HepG2 (cell line): ENCODE measurements at regions of chr5 and their contacts with region 1.

Region 1: DNA sequence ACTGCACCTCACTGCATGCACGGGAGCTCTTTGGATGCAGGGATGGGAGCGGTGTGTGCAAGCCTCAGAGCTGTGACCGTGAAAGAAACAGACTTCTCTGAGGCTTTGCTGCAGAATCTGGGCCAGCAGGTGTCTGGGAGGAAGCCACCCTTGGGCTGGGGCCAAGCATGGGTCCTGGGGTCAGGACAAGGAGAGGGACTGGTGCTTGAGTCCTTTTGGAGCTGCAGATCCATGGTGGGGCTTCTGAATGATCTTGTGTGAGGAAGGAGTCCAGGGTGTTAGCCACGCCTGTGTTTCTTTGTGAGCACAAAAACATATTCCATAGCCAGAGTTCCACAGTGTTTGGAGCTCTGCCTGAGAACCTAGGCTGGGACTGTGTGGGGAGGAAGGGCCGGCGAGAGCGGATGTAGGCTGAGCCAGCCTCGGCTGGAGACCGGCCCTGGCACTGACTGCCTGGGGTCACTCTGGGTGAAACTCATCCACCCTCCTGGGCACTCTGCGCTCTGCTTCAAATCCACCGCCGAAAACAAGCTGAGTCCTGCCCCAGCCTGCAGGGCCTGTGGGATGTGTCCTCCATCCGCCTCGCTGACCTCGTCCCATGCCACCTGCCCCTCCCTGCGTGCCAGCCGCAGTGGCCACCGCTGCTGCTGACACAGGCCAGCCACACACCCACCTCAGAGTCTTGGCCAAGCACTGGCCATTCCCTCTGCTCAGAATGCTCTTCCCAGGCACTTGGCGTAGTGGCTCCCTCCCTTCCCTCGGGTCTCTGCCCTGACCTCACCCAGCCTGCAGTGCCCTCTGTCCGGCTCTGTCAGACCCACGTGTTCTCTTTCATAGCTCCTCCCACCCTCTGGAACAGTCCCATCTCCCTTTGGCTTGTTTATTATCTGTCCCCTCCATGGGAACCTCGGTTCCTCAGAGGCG is 26.7 kb downstream of the ERGIC1 start:
- DNase-seq: no peak
- ATAC-seq: no peak
- H3K4me3 ChIP-seq: peak overlapping the region in 1 of 3 experiments; percentile 6; a peak in 1 of 6 replicates
- H3K27ac ChIP-seq: peak overlapping the region; percentile 99
- H3K4me1 ChIP-seq: peaks cover 87% of the 10 kb centered on the region
- H3K27me3 ChIP-seq: no peaks in the 10 kb centered on the region
- CTCF ChIP-seq: no peak
- EP300 ChIP-seq: no peak
- POLR2A ChIP-seq: no peak
- RAD21 ChIP-seq: no peak

Region 2: GRCh38 chr5:172733131-172733973 is 127.4 kb before region 1 on chr5:
- CTCF ChIA-PET with region 1: no interaction called
- POLR2A ChIA-PET with region 1: interaction called, 13 read pairs
- in situ Hi-C with region 1: no loop called
- intact Hi-C with region 1: no loop called
- DNase-seq: peak; percentile 51
- ATAC-seq: peak; percentile 71
- H3K4me3 ChIP-seq: peak overlapping the region; percentile 36 to 57 (median 37); a peak in 5 of 6 replicates
- H3K27ac ChIP-seq: peak overlapping the region; percentile 17
- H3K4me1 ChIP-seq: peaks cover 88% of the 10 kb centered on the region
- H3K27me3 ChIP-seq: peaks cover 0 to 15% of the 10 kb centered on the region in 2 experiments; a peak in 3 of 5 replicates
- CTCF ChIP-seq: no peak
- EP300 ChIP-seq: no peak
- POLR2A ChIP-seq: 0 out of 4 replicates have a peak, but pooled peaks of 1 of the 2 experiments have one; percentile 21
- RAD21 ChIP-seq: no peak

Region 3: GRCh38 chr5:172795318-172795977 is 65.3 kb before region 1 on chr5:
- CTCF ChIA-PET with region 1: no interaction called
- POLR2A ChIA-PET with region 1: interaction called, 94 read pairs
- in situ Hi-C with region 1: no loop called
- intact Hi-C with region 1: no loop called
- DNase-seq: no peak
- ATAC-seq: no peak
- H3K4me3 ChIP-seq: no peak overlapping the region
- H3K27ac ChIP-seq: no peak overlapping the region
- H3K4me1 ChIP-seq: peaks cover 97% of the 10 kb centered on the region
- H3K27me3 ChIP-seq: no peaks in the 10 kb centered on the region
- CTCF ChIP-seq: no peak
- EP300 ChIP-seq: no peak
- POLR2A ChIP-seq: no peak
- RAD21 ChIP-seq: no peak

Region 4: DNA sequence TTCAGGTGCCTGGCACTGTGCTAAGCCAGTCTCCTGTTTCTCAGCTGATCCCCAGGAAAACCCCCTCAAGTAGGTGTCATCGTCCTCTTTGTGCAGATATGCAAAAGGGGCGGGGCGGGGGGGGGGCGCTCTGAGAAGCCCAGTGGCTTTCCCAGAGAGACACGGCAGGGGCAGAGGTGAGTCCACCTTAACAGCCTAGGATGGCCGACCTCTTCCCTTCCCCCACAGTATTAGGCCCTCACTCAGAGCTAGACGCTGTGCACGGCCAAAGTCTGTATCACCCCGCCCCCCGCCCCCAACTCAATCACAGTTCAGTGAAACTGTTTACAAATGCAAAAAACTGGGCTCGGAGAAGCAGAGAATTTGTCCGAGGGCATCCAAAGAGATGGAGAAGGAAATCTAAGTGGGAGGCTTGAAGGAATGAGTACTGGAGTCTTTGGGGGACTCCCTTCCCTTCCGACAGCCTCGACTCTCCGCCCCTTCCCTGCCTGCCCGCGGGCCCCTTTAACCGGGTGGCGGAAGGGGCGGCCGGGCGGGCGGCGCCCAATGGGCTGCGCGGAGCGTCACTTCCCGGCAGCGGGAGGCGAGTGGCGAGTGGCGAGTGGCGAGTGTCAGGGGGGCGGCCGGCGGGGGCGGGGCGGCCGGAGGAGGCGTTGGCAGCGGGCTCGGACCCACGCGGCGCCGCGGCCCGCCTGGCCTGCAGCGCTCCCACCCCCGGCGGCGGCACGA is 26.9 kb before region 1 on chr5 and contains the start of gene ERGIC1:
- CTCF ChIA-PET with region 1: no interaction called
- POLR2A ChIA-PET with region 1: interaction called, 34 read pairs
- in situ Hi-C with region 1: no loop called
- intact Hi-C with region 1: no loop called
- DNase-seq: peak; percentile 64
- ATAC-seq: peak; percentile 84
- H3K4me3 ChIP-seq: peak within 1 kb of the TSS; percentile 83 to 95 (median 86)
- H3K27ac ChIP-seq: peak within 1 kb of the TSS; percentile 90
- H3K4me1 ChIP-seq: peaks cover 71% of the 10 kb centered on the region
- H3K27me3 ChIP-seq: no peaks in the 10 kb centered on the region; a peak in 1 of 5 replicates
- CTCF ChIP-seq: no peak
- EP300 ChIP-seq: 0 out of 4 replicates have a peak, but pooled peaks have one; percentile 28 to 30
- POLR2A ChIP-seq: peak; percentile 76 to 88
- RAD21 ChIP-seq: peak; percentile 44
- total RNA-seq, gene ERGIC1: 56.6 and 78.5 TPM in 2 replicates

Region 5: GRCh38 chr5:172896465-172896864 is 35.7 kb after region 1 on chr5:
- CTCF ChIA-PET with region 1: no interaction called
- POLR2A ChIA-PET with region 1: interaction called, 14 read pairs
- in situ Hi-C with region 1: no loop called
- intact Hi-C with region 1: no loop called
- DNase-seq: no peak
- ATAC-seq: no peak
- H3K4me3 ChIP-seq: no peak overlapping the region
- H3K27ac ChIP-seq: no peak overlapping the region
- H3K4me1 ChIP-seq: peaks cover 39% of the 10 kb centered on the region
- H3K27me3 ChIP-seq: no peaks in the 10 kb centered on the region
- CTCF ChIP-seq: no peak
- EP300 ChIP-seq: no peak
- POLR2A ChIP-seq: no peak
- RAD21 ChIP-seq: no peak